ENCODE measurements at regions of chr4 and their contacts with region 1.

Region 1: GRCh38 chr4:107647591-107647990 is 72.4 kb downstream of the PAPSS1 start:
- DNase-seq: no peak
- ATAC-seq: no peak
- H3K4me3 ChIP-seq: no peak overlapping the region
- H3K27ac ChIP-seq: no peak overlapping the region
- H3K4me1 ChIP-seq: peaks cover 0 to 5% (median 0%) of the 10 kb centered on the region in 12 donors
- H3K27me3 ChIP-seq: no peaks in the 10 kb centered on the region
- CTCF ChIP-seq: no peak
- POLR2A ChIP-seq: no peak

Region 2: GRCh38 chr4:107330915-107331314 is 316.7 kb before region 1 on chr4:
- intact Hi-C with region 1: loop called in 1 of 10 experiments (anchors 5 kb)
- DNase-seq: no peak
- ATAC-seq: no peak
- H3K4me3 ChIP-seq: no peak overlapping the region
- H3K27ac ChIP-seq: no peak overlapping the region
- H3K4me1 ChIP-seq: no peaks in the 10 kb centered on the region
- H3K27me3 ChIP-seq: no peaks in the 10 kb centered on the region
- CTCF ChIP-seq: no peak
- POLR2A ChIP-seq: no peak

Region 3: GRCh38 chr4:107349732-107350131 is 297.9 kb before region 1 on chr4:
- intact Hi-C with region 1: loop called in 1 of 10 experiments (anchors 5 kb)
- DNase-seq: no peak
- ATAC-seq: no peak
- H3K4me3 ChIP-seq: no peak overlapping the region
- H3K27ac ChIP-seq: no peak overlapping the region
- H3K4me1 ChIP-seq: no peaks in the 10 kb centered on the region
- H3K27me3 ChIP-seq: no peaks in the 10 kb centered on the region
- CTCF ChIP-seq: no peak
- POLR2A ChIP-seq: no peak

Region 4: DNA sequence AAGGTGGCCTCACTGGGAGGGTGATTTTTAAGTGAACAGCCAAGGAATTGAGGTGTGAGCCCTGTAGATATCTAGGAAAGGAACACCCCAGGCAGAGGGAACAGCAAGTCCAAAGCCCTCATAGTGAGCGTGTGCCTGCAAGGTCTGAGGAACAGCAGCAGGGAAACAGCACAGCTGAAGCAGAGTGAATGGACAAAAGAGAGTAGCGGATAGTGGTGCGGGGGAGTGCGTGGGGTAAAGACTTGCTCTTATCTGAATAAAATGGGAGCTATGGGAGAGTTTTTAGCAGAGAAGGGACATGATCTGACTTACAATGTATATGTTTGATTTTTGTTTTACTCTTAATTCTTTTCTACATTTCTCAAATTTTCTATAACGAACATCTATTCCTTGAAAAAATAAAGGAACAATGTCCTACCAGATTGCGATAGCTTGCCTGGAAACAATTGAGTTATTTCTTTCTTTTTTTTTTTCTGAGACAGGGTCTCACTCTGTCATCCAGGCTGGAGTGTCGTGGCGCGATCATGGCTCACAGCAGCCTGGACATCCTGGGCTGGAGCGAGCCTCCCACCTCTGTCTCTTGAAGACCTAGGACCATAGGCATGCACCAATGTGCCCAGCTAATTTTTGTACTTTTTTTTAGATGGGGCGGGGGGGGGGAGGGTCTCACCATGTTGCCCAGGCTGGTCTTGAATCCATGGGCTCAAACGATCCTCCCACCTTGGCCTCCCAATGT is 322.6 kb after region 1 on chr4:
- intact Hi-C with region 1: no loop called
- DNase-seq: no peak
- ATAC-seq: no peak
- H3K4me3 ChIP-seq: no peak overlapping the region
- H3K27ac ChIP-seq: no peak overlapping the region
- H3K4me1 ChIP-seq: no peaks in the 10 kb centered on the region
- H3K27me3 ChIP-seq: no peaks in the 10 kb centered on the region
- CTCF ChIP-seq: no peak
- POLR2A ChIP-seq: no peak

Measured in heart left ventricle (tissue), 16 donors.